H1 (cell line): ENCODE measurements at regions of chr10 and their contacts with region 1.

Region 1: GRCh38 chr10:69644658-69645295 is 14.7 kb downstream of the FAM241B start:
- DNase-seq: peak in 1 of 2 experiments; percentile 86
- H3K4me3 ChIP-seq: no peak overlapping the region
- H3K27ac ChIP-seq: no peak overlapping the region
- H3K4me1 ChIP-seq: peaks cover 0 to 6% (median 4%) of the 10 kb centered on the region in 4 experiments; a peak in 4 of 7 replicates
- H3K27me3 ChIP-seq: no peaks in the 10 kb centered on the region; a peak in 2 of 7 replicates
- CTCF ChIP-seq: peak; percentile 79 to 94 (median 84)
- EP300 ChIP-seq: no peak
- POLR2A ChIP-seq: no peak
- RAD21 ChIP-seq: peak; percentile 90 to 96

Region 2: GRCh38 chr10:69248117-69248730 is 396.6 kb before region 1 on chr10:
- CTCF ChIA-PET with region 1: no interaction called
- POLR2A ChIA-PET with region 1: no interaction called
- DNase-seq: no peak
- H3K4me3 ChIP-seq: no peak overlapping the region
- H3K27ac ChIP-seq: no peak overlapping the region
- H3K4me1 ChIP-seq: no peaks in the 10 kb centered on the region; a peak in 1 of 7 replicates
- H3K27me3 ChIP-seq: no peaks in the 10 kb centered on the region
- CTCF ChIP-seq: no peak
- EP300 ChIP-seq: no peak
- POLR2A ChIP-seq: no peak
- RAD21 ChIP-seq: no peak

Region 3: GRCh38 chr10:69600761-69601330 is 43.9 kb before region 1 on chr10:
- CTCF ChIA-PET with region 1: interaction called, 12 read pairs
- POLR2A ChIA-PET with region 1: no interaction called
- DNase-seq: no peak
- H3K4me3 ChIP-seq: no peak overlapping the region
- H3K27ac ChIP-seq: no peak overlapping the region
- H3K4me1 ChIP-seq: no peaks in the 10 kb centered on the region
- H3K27me3 ChIP-seq: peaks cover 0 to 1% (median 0%) of the 10 kb centered on the region in 4 experiments; a peak in 1 of 7 replicates
- CTCF ChIP-seq: no peak
- EP300 ChIP-seq: no peak
- POLR2A ChIP-seq: no peak
- RAD21 ChIP-seq: no peak

Region 4: GRCh38 chr10:69612760-69613159 is 32.0 kb before region 1 on chr10:
- CTCF ChIA-PET with region 1: interaction called, 10 read pairs
- POLR2A ChIA-PET with region 1: no interaction called
- DNase-seq: no peak
- H3K4me3 ChIP-seq: no peak overlapping the region
- H3K27ac ChIP-seq: no peak overlapping the region
- H3K4me1 ChIP-seq: no peaks in the 10 kb centered on the region
- H3K27me3 ChIP-seq: no peaks in the 10 kb centered on the region
- CTCF ChIP-seq: no peak
- EP300 ChIP-seq: no peak
- POLR2A ChIP-seq: no peak
- RAD21 ChIP-seq: no peak